Colonic mucosa (tissue), 4 donors: ENCODE measurements at regions of chrX and their contacts with region 1.

Region 1: GRCh38 chrX:120477453-120477852 is 8.4 kb upstream of the LAMP2 start:
- DNase-seq: no peak
- H3K4me3 ChIP-seq: no peak overlapping the region
- H3K27ac ChIP-seq: no peak overlapping the region
- H3K4me1 ChIP-seq: no peaks in the 10 kb centered on the region
- H3K27me3 ChIP-seq: no peaks in the 10 kb centered on the region
- CTCF ChIP-seq: no peak

Region 2: DNA sequence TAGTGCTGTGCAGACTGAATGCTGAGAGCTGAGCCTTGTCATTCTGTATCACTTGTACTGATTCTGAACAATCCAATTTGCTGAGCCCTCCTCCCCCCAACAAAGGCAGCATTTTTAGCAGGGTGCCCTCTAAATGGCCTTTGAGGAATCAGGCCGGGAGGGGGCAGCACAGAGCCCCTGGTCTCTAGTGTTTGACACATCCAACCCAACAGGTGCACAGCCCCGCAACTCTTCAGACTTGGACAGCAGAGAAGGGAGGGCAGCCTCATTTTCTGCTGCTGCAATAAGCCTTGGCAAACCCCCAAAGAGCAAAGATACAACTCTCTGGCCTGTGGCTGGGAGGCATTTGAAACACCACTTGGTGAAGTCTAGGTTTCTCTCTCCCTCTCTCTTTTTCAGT is 112.1 kb before region 1 on chrX:
- intact Hi-C with region 1: loop called (anchors 5 kb)
- DNase-seq: peak; percentile 47
- H3K4me3 ChIP-seq: no peak overlapping the region
- H3K27ac ChIP-seq: no peak overlapping the region
- H3K4me1 ChIP-seq: no peaks in the 10 kb centered on the region
- H3K27me3 ChIP-seq: peaks cover 3% of the 10 kb centered on the region
- CTCF ChIP-seq: peak; percentile 24

Region 3: GRCh38 chrX:120380699-120381098 is 96.8 kb before region 1 on chrX:
- intact Hi-C with region 1: loop called (anchors 5 kb)
- DNase-seq: no peak
- H3K4me3 ChIP-seq: no peak overlapping the region
- H3K27ac ChIP-seq: no peak overlapping the region
- H3K4me1 ChIP-seq: no peaks in the 10 kb centered on the region
- H3K27me3 ChIP-seq: no peaks in the 10 kb centered on the region
- CTCF ChIP-seq: no peak